Heart right ventricle (tissue), 16 donors: ENCODE measurements at regions of chr7 and their contacts with region 1.

Region 1: GRCh38 chr7:50787825-50788224 is 5.1 kb upstream of the GRB10 start:
- DNase-seq: no peak
- ATAC-seq: no peak
- H3K4me3 ChIP-seq: no peak overlapping the region
- H3K27ac ChIP-seq: no peak overlapping the region
- H3K4me1 ChIP-seq: peaks cover 4 to 86% (median 59%) of the 10 kb centered on the region in 9 donors
- H3K27me3 ChIP-seq: peaks cover 0 to 2% (median 0%) of the 10 kb centered on the region in 7 donors
- CTCF ChIP-seq: no peak

Region 2: GRCh38 chr7:50711257-50712175 is 76.3 kb before region 1 on chr7:
- intact Hi-C with region 1: loop called in 2 of 10 experiments (anchors 5 kb)
- DNase-seq: peak; percentile 41 to 56
- ATAC-seq: peak in 7 of 8 donors; percentile 18 to 60 (median 40)
- H3K4me3 ChIP-seq: no peak overlapping the region
- H3K27ac ChIP-seq: peak overlapping the region in 2 of 10 donors; percentile 63 to 66
- H3K4me1 ChIP-seq: peaks cover 12 to 100% (median 59%) of the 10 kb centered on the region in 9 donors
- H3K27me3 ChIP-seq: no peaks in the 10 kb centered on the region
- CTCF ChIP-seq: no peak

Region 3: GRCh38 chr7:51344406-51345138 is 556.7 kb after region 1 on chr7:
- intact Hi-C with region 1: no loop called
- DNase-seq: no peak
- ATAC-seq: peak in 3 of 8 donors; percentile 22 to 39 (median 24)
- H3K4me3 ChIP-seq: no peak overlapping the region
- H3K27ac ChIP-seq: no peak overlapping the region
- H3K4me1 ChIP-seq: peaks cover 0 to 9% (median 0%) of the 10 kb centered on the region in 9 donors
- H3K27me3 ChIP-seq: no peaks in the 10 kb centered on the region
- CTCF ChIP-seq: no peak

Region 4: GRCh38 chr7:52648872-52649271 is 1861.0 kb after region 1 on chr7:
- intact Hi-C with region 1: no loop called
- DNase-seq: no peak
- ATAC-seq: no peak
- H3K4me3 ChIP-seq: no peak overlapping the region
- H3K27ac ChIP-seq: no peak overlapping the region
- H3K4me1 ChIP-seq: no peaks in the 10 kb centered on the region
- H3K27me3 ChIP-seq: no peaks in the 10 kb centered on the region
- CTCF ChIP-seq: no peak